SK-N-SH (cell line): ENCODE measurements at regions of chr19 and their contacts with region 1.

Region 1: GRCh38 chr19:7562646-7563393 is 27.3 kb downstream of the PNPLA6 start:
- DNase-seq: no peak
- H3K4me3 ChIP-seq: no peak overlapping the region
- H3K27ac ChIP-seq: no peak overlapping the region
- H3K4me1 ChIP-seq: no peaks in the 10 kb centered on the region
- H3K27me3 ChIP-seq: no peaks in the 10 kb centered on the region
- CTCF ChIP-seq: no peak
- EP300 ChIP-seq: no peak
- RAD21 ChIP-seq: no peak

Region 2: DNA sequence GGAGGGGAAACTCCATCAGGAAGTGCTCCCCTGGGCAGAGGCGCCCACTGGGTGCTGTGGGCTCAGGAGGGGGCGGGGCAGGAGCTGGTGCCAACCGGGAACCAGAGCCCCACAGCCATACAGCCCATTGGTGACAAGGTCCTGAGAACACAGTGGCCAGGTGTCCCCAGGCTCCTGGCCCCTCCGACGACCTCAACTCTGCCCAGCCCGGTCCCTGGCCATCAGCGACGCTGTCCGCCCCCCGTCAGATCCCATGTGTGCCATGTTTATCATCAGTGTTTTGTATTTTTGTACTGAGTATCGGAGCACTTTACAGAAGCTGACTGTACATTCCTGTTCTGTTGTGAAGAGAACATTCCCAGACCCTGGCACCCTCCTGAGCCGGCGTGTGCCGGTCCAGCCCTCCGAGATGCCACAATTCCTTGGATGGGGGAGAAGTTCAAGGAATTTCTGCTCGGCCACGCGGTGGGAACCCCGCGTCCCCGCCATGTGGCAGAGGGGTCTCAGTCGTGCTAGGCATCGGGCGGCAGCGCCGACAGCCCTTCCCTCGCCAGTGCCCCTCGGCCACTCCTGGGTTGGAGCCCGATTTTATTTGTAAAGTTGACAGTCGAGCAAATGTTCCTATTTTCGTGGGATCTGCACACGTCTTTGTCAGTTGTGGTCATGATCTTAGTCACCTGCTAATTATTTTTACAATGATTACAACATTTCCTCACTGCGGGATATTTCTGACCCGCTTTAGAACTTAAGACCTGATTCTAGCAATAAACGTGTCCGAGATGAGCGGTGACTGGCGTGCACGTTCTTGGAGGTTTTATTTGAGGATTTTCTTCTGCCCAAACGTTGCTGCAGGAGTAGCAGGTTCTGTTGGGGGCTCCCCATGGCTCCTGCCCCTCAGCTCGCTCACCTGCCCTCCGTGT is 90.9 kb before region 1 on chr19:
- CTCF ChIA-PET with region 1: no interaction called
- POLR2A ChIA-PET with region 1: no interaction called
- DNase-seq: no peak
- H3K4me3 ChIP-seq: no peak overlapping the region
- H3K27ac ChIP-seq: no peak overlapping the region
- H3K4me1 ChIP-seq: peaks cover 0 to 3% of the 10 kb centered on the region in 2 experiments; a peak in 1 of 4 replicates
- H3K27me3 ChIP-seq: no peaks in the 10 kb centered on the region
- CTCF ChIP-seq: no peak
- EP300 ChIP-seq: no peak
- RAD21 ChIP-seq: no peak

Region 3: GRCh38 chr19:7575434-7576040 is 12.7 kb after region 1 on chr19:
- CTCF ChIA-PET with region 1: interaction called, 43 read pairs
- POLR2A ChIA-PET with region 1: no interaction called
- DNase-seq: no peak
- H3K4me3 ChIP-seq: no peak overlapping the region
- H3K27ac ChIP-seq: no peak overlapping the region
- H3K4me1 ChIP-seq: no peaks in the 10 kb centered on the region
- H3K27me3 ChIP-seq: peaks cover 42% of the 10 kb centered on the region
- CTCF ChIP-seq: no peak
- EP300 ChIP-seq: no peak
- RAD21 ChIP-seq: no peak

Region 4: GRCh38 chr19:7595466-7596133 is 32.8 kb after region 1 on chr19 and contains the start of gene CAMSAP3:
- CTCF ChIA-PET with region 1: interaction called, 19 read pairs
- POLR2A ChIA-PET with region 1: no interaction called
- DNase-seq: peak; percentile 90
- H3K4me3 ChIP-seq: peak within 1 kb of the TSS; percentile 47 to 48; a peak in 3 of 4 replicates
- H3K27ac ChIP-seq: no peak within 1 kb of the TSS; a peak in 1 of 4 replicates
- H3K4me1 ChIP-seq: peaks cover 0 to 8% of the 10 kb centered on the region in 2 experiments; a peak in 1 of 4 replicates
- H3K27me3 ChIP-seq: peaks cover 23% of the 10 kb centered on the region
- CTCF ChIP-seq: no peak
- EP300 ChIP-seq: peak in 1 of 2 experiments; percentile 34; a peak in 1 of 4 replicates
- RAD21 ChIP-seq: no peak; the same call in 1 of the 2 replicates
- polyA plus RNA-seq, gene CAMSAP3: 0.05 and 0.08 TPM in 2 replicates

Region 5: GRCh38 chr19:7636691-7637373 is 74.0 kb after region 1 on chr19 and contains the start of gene STXBP2:
- CTCF ChIA-PET with region 1: interaction called, 25 read pairs
- POLR2A ChIA-PET with region 1: no interaction called
- DNase-seq: peak; percentile 73
- H3K4me3 ChIP-seq: peak within 1 kb of the TSS in 1 of 2 experiments; percentile 21; a peak in 1 of 4 replicates
- H3K27ac ChIP-seq: no peak within 1 kb of the TSS
- H3K4me1 ChIP-seq: peaks cover 0 to 4% of the 10 kb centered on the region in 2 experiments; a peak in 1 of 4 replicates
- H3K27me3 ChIP-seq: peaks cover 37% of the 10 kb centered on the region
- CTCF ChIP-seq: no peak
- EP300 ChIP-seq: no peak
- RAD21 ChIP-seq: no peak
- polyA plus RNA-seq, gene STXBP2: 1.3 and 4.7 TPM in 2 replicates

Region 6: DNA sequence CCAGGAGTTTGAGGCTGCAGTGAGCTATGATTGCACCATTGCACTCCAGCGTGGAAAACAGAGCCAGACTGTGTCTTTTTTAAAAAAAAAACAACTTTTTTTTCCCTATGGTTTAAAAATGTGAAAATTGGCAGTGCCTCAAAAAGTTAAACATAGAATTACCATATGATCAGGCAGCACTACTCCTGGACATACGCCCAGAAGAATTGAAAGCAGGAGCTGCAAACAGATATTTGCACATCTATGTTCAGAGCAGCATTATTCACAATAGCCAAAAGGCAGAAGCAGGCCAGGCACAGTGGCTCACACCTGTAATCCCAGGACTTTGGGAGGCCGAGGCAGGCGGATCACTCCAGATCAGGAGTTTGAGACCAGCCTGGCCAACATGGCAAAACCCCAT is 102.3 kb after region 1 on chr19:
- CTCF ChIA-PET with region 1: interaction called, 16 read pairs
- POLR2A ChIA-PET with region 1: no interaction called
- DNase-seq: no peak
- H3K4me3 ChIP-seq: no peak overlapping the region
- H3K27ac ChIP-seq: no peak overlapping the region
- H3K4me1 ChIP-seq: no peaks in the 10 kb centered on the region
- H3K27me3 ChIP-seq: peaks cover 79% of the 10 kb centered on the region
- CTCF ChIP-seq: no peak
- EP300 ChIP-seq: no peak
- RAD21 ChIP-seq: no peak

Region 7: GRCh38 chr19:7799640-7800355 is 237.0 kb after region 1 on chr19:
- CTCF ChIA-PET with region 1: interaction called, 116 read pairs
- POLR2A ChIA-PET with region 1: interaction called, 3 read pairs
- DNase-seq: peak; percentile 73
- H3K4me3 ChIP-seq: peak overlapping the region in 1 of 2 experiments; percentile 54; a peak in 2 of 4 replicates
- H3K27ac ChIP-seq: no peak overlapping the region
- H3K4me1 ChIP-seq: no peaks in the 10 kb centered on the region
- H3K27me3 ChIP-seq: peaks cover 43% of the 10 kb centered on the region
- CTCF ChIP-seq: peak; percentile 65
- EP300 ChIP-seq: no peak
- RAD21 ChIP-seq: peak; percentile 80